H1 (cell line): ENCODE measurements at regions of chr19 and their contacts with region 1.

Region 1: GRCh38 chr19:55358943-55359633 is 4.0 kb downstream of the GARIN5B start:
- DNase-seq: no peak
- H3K4me3 ChIP-seq: no peak overlapping the region
- H3K27ac ChIP-seq: no peak overlapping the region
- H3K4me1 ChIP-seq: peaks cover 0 to 10% (median 7%) of the 10 kb centered on the region in 4 experiments; a peak in 6 of 7 replicates
- H3K27me3 ChIP-seq: peaks cover 2 to 31% (median 26%) of the 10 kb centered on the region in 4 experiments
- CTCF ChIP-seq: no peak
- EP300 ChIP-seq: no peak
- POLR2A ChIP-seq: no peak
- RAD21 ChIP-seq: no peak

Region 2: GRCh38 chr19:55391702-55392615 is 32.9 kb after region 1 on chr19:
- CTCF ChIA-PET with region 1: interaction called, 3 read pairs
- POLR2A ChIA-PET with region 1: interaction called, 16 read pairs
- DNase-seq: no peak
- H3K4me3 ChIP-seq: peak overlapping the region in 1 of 4 experiments; percentile 14; a peak in 2 of 8 replicates
- H3K27ac ChIP-seq: no peak overlapping the region
- H3K4me1 ChIP-seq: peaks cover 0 to 44% (median 34%) of the 10 kb centered on the region in 4 experiments; a peak in 6 of 7 replicates
- H3K27me3 ChIP-seq: no peaks in the 10 kb centered on the region
- CTCF ChIP-seq: no peak
- EP300 ChIP-seq: no peak
- POLR2A ChIP-seq: peak in 1 of 2 experiments; percentile 10; a peak in 1 of 3 replicates
- RAD21 ChIP-seq: no peak

Region 3: GRCh38 chr19:55516878-55517620 is 158.0 kb after region 1 on chr19:
- CTCF ChIA-PET with region 1: no interaction called
- POLR2A ChIA-PET with region 1: no interaction called
- DNase-seq: peak; percentile 83 to 99
- H3K4me3 ChIP-seq: peak overlapping the region in 1 of 4 experiments; percentile 46; a peak in 2 of 8 replicates
- H3K27ac ChIP-seq: no peak overlapping the region
- H3K4me1 ChIP-seq: no peaks in the 10 kb centered on the region; a peak in 1 of 7 replicates
- H3K27me3 ChIP-seq: no peaks in the 10 kb centered on the region; a peak in 2 of 7 replicates
- CTCF ChIP-seq: peak; percentile 86 to 93 (median 90)
- EP300 ChIP-seq: no peak
- POLR2A ChIP-seq: no peak
- RAD21 ChIP-seq: peak; percentile 91 to 93